CD14-positive monocyte (primary cell): ENCODE measurements at regions of chr10 and their contacts with region 1.

Region 1: DNA sequence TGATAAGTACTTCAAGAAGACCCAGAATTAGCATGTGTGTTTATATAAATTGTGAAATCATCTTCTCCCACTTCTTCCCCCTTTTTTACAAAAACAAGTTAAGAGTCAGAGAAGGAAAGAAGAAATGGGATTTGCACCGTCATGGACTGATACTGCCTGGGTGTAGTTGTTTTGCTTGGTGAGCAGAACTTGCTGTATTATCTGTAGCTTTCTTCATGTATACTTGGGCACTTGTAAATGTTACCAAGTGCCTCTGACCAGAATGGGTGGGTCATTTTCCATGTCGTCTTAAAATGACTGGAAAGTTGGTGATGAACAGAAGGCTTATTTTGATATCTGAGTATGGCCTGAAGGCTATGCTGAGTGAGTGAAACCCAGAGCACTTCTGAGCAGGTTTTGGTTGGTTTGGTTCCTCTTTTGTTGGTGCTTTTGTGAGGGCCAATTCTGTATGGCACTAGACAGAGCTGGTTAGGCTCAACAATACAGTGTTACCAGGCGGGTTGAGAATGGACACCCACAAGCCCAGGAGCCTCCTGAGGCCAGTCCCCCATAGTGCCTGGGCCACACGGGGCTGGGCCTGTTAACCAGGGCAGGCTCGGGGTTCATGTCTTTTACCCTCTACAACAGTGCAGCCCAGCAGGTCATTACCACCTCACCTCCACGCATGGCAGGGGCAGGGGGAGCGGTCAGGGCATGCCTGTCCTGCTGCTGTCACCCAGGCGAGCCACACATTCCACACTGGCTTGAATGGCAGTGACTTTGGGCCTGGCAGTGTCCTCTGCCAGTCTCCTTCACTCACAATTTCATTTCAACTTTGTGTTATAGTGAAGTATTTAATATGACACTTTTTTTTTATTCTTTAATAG is 115.1 kb downstream of the CCNY start:
- DNase-seq: peak; percentile 53 to 84 (median 77)
- H3K4me3 ChIP-seq: peak overlapping the region; percentile 7 to 76 (median 43)
- H3K4me3 Mint-ChIP-seq: peak overlapping the region; percentile 80 to 96
- H3K27ac ChIP-seq: peak overlapping the region; percentile 89 to 97
- H3K27ac Mint-ChIP-seq: peak overlapping the region; percentile 92 to 99 (median 95)
- H3K4me1 ChIP-seq: peaks cover 93 to 97% of the 10 kb centered on the region in 2 donors
- H3K4me1 Mint-ChIP-seq: peaks cover 93% of the 10 kb centered on the region
- H3K27me3 ChIP-seq: no peaks in the 10 kb centered on the region
- H3K27me3 Mint-ChIP-seq: peaks cover 0 to 1% (median 0%) of the 10 kb centered on the region in 3 donors
- CTCF ChIP-seq: no peak

Region 2: DNA sequence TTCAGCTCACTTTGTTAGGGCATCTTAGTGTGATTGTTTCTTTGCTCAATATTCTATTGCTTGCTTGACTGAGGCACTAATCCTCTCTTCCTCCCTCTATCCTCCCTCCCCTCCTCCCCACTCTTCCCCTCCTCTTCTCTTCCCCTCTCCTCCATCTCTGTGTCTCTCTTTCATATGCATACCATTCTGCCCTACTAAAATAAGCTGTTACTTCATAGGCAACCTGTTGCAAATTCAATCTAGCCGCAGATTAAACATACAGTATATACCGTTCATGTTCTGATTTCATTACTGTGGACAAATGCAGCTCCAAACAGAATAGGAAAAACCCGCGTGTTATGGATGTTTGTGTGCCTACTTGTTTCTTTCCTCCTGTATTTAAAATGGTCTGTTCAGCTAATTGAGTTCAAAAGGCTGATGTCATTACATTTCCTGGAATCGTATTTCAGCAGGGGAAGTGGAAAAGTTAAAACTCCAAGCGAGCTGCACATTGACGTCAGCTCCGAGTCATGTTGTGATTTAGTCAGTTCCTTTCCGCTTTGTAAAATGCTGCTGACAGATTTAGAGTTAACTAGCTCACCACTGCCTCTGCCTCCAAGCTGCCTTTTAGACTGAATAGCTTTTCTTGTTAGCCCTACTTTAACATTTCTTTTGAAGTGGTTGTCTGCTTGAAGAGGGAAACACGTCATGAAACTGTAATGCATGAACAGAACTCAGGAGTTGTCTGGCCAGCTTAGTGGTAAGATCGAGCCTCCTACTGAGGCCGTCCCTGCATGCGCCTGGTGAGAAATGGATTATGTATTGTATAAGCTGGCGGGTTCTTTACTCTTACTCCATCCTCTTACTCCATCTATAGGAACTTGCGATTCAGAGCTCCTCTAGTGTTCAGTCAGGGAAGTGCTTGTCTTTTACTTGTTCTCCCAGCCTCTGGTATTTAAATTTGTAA is 255.8 kb before region 1 on chr10:
- intact Hi-C with region 1: loop called in 1 of 2 experiments (anchors 10 kb)
- DNase-seq: peak; percentile 91 to 96 (median 95)
- H3K4me3 ChIP-seq: peak overlapping the region; percentile 44 to 71 (median 65)
- H3K4me3 Mint-ChIP-seq: peak overlapping the region; percentile 81 to 88
- H3K27ac ChIP-seq: peak overlapping the region; percentile 88 to 93
- H3K27ac Mint-ChIP-seq: peak overlapping the region; percentile 98 to 100 (median 99)
- H3K4me1 ChIP-seq: peaks cover 22 to 28% of the 10 kb centered on the region in 2 donors
- H3K4me1 Mint-ChIP-seq: peaks cover 34% of the 10 kb centered on the region
- H3K27me3 ChIP-seq: no peaks in the 10 kb centered on the region
- H3K27me3 Mint-ChIP-seq: peaks cover 0 to 2% (median 0%) of the 10 kb centered on the region in 3 donors
- CTCF ChIP-seq: peak; percentile 98

Region 3: GRCh38 chr10:35336084-35336831 is 115.1 kb before region 1 on chr10 and contains the start of gene CCNY:
- intact Hi-C with region 1: loop called in 1 of 2 experiments (anchors 5 kb)
- DNase-seq: peak; percentile 38 to 60 (median 46)
- H3K4me3 ChIP-seq: peak within 1 kb of the TSS; percentile 85 to 93 (median 88)
- H3K4me3 Mint-ChIP-seq: peak within 1 kb of the TSS; percentile 89 to 96
- H3K27ac ChIP-seq: peak within 1 kb of the TSS; percentile 19 to 71
- H3K27ac Mint-ChIP-seq: peak within 1 kb of the TSS; percentile 57 to 90 (median 86)
- H3K4me1 ChIP-seq: peaks cover 45 to 68% of the 10 kb centered on the region in 2 donors
- H3K4me1 Mint-ChIP-seq: peaks cover 69% of the 10 kb centered on the region
- H3K27me3 ChIP-seq: no peaks in the 10 kb centered on the region
- H3K27me3 Mint-ChIP-seq: peaks cover 0 to 1% (median 0%) of the 10 kb centered on the region in 3 donors
- CTCF ChIP-seq: no peak
- polyA plus RNA-seq, gene CCNY: 39.9 to 116 (median 64.8) TPM

Region 4: DNA sequence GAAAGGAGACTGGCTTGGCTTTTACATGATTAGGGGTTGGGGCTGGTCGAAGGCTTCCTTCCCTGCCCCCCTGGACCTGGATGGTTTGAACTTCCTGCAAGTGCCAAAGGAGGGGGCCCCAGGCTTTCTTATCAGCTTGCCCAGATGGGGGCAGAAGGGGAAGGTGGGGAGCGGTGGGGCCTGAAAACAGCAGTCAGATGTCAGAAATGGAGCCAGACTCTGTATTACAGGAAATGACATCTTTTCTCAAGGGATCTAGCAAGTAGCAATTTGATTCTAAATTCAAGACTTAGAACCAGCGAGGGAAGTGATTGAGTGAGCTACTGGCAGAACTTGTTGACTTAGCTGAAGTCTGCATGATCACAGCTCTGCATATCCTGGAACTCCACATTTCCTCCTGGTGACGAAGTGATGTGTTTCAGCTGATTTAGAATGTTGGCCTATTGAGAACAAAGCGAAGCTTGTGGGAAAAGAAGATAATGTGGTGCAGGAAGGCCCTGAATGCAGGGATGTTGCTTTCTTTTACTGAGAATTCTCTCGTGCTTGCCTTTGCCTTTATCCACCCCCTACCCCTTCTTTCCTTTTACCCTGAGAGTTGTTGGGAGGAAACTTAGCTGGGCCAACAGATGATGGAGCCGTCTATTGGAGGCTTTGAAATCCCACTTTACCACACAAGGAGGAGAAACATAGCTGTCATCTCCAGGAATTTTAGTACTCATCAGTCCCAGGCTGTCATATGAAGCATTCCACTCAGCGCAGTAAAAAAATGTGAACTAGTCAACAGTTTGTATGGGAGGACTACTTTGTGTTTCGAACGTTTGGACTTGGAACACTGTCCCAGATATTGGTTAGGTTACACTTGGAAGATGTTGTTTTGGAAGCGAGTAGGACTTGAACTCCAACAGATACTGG is 71.9 kb before region 1 on chr10:
- intact Hi-C with region 1: loop called in 1 of 2 experiments (anchors 10 kb)
- DNase-seq: peak; percentile 6 to 30 (median 13)
- H3K4me3 ChIP-seq: peak overlapping the region in 1 of 3 experiments; percentile 9
- H3K4me3 Mint-ChIP-seq: peak overlapping the region; percentile 7 to 58
- H3K27ac ChIP-seq: peak overlapping the region in 1 of 2 donors; percentile 66
- H3K27ac Mint-ChIP-seq: peak overlapping the region; percentile 51 to 89 (median 72)
- H3K4me1 ChIP-seq: peaks cover 29 to 37% of the 10 kb centered on the region in 2 donors
- H3K4me1 Mint-ChIP-seq: peaks cover 58% of the 10 kb centered on the region
- H3K27me3 ChIP-seq: no peaks in the 10 kb centered on the region
- H3K27me3 Mint-ChIP-seq: no peaks in the 10 kb centered on the region
- CTCF ChIP-seq: no peak